A673 (cell line): ENCODE measurements at regions of chr11 and their contacts with region 1.

Region 1: GRCh38 chr11:126440792-126441514 is 85.5 kb downstream of the ST3GAL4 start:
- DNase-seq: peak; percentile 93
- H3K4me3 ChIP-seq: no peak overlapping the region
- H3K27ac ChIP-seq: no peak overlapping the region
- H3K4me1 ChIP-seq: no peaks in the 10 kb centered on the region
- H3K27me3 ChIP-seq: no peaks in the 10 kb centered on the region
- CTCF ChIP-seq: peak; percentile 98

Region 2: GRCh38 chr11:126480410-126481302 is 39.7 kb after region 1 on chr11:
- CTCF ChIA-PET with region 1: interaction called, 45 read pairs
- POLR2A ChIA-PET with region 1: no interaction called
- intact Hi-C with region 1: loop called (anchors 1 kb)
- DNase-seq: peak; percentile 94
- H3K4me3 ChIP-seq: no peak overlapping the region
- H3K27ac ChIP-seq: peak overlapping the region; percentile 61
- H3K4me1 ChIP-seq: peaks cover 19% of the 10 kb centered on the region
- H3K27me3 ChIP-seq: no peaks in the 10 kb centered on the region
- CTCF ChIP-seq: peak; percentile 99

Region 3: DNA sequence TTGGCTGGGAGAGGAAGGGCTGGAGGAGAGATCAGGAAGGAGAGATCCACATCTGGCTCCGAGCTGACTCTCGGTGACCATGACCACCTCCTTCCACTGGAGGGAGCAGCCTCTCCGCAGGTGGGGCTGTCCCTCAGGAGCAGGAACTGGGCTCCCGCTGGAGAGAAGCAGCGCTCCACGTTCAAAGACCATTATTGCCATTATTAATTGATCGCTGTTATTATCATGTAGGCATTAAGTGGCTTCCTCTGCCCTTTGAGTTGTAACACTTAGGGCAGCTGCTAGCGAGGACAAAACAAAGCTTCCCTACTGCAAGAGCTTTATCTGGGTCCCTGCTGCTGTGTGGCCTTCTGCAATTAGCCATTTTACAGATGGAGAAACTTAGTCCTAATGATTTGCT is 166.4 kb after region 1 on chr11:
- CTCF ChIA-PET with region 1: interaction called, 5 read pairs
- POLR2A ChIA-PET with region 1: no interaction called
- intact Hi-C with region 1: loop called (anchors 10 kb)
- DNase-seq: peak; percentile 59
- H3K4me3 ChIP-seq: no peak overlapping the region
- H3K27ac ChIP-seq: no peak overlapping the region
- H3K4me1 ChIP-seq: peaks cover 23% of the 10 kb centered on the region
- H3K27me3 ChIP-seq: no peaks in the 10 kb centered on the region
- CTCF ChIP-seq: peak; percentile 77

Region 4: DNA sequence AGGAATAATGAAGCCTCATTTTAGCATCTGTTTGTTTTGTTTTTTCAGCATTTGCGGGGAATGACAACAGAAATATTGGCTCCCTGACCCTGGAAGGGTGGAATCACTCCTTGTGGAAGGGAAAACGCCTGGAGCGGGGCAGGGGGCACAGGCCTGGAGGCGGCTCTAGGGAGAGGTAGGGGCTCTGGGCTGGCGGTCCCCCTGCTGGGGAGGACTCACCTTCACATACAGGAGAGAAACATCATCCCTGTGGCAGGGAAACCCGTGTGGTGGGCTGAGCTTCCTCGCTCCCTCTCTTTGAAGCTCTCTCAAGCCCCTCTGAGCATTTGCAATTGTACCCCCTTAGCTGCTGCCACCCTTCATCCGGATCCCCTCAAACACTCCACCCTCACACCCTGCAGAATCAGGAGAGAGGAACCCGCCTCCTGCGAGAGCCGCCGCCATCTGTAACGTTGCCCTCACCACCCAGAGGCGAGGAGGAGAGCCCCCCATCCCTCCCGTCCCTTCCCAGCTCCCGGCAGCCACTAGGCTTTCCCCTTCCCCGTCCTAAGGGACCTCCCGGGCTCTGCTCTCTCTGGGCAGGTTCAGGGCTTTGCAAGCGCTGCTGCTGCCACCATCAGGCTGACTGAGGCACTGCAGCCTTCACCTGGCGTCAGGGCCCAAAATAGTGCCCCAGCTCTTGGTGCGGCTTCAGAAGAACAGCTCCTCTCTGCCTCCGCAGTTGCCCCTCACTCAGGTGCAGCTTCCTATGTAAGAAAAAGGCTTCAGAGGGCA is 549.2 kb after region 1 on chr11:
- CTCF ChIA-PET with region 1: interaction called, 4 read pairs
- POLR2A ChIA-PET with region 1: no interaction called
- intact Hi-C with region 1: loop called (anchors 2 kb)
- DNase-seq: peak; percentile 83
- H3K4me3 ChIP-seq: no peak overlapping the region
- H3K27ac ChIP-seq: no peak overlapping the region
- H3K4me1 ChIP-seq: no peaks in the 10 kb centered on the region
- H3K27me3 ChIP-seq: peaks cover 16% of the 10 kb centered on the region
- CTCF ChIP-seq: peak; percentile 99

Region 5: GRCh38 chr11:127493330-127494022 is 1052.5 kb after region 1 on chr11:
- CTCF ChIA-PET with region 1: interaction called, 4 read pairs
- POLR2A ChIA-PET with region 1: no interaction called
- intact Hi-C with region 1: loop called (anchors 1 kb)
- DNase-seq: peak; percentile 40
- H3K4me3 ChIP-seq: no peak overlapping the region
- H3K27ac ChIP-seq: no peak overlapping the region
- H3K4me1 ChIP-seq: no peaks in the 10 kb centered on the region
- H3K27me3 ChIP-seq: peaks cover 11% of the 10 kb centered on the region
- CTCF ChIP-seq: peak; percentile 69